OCI-LY7 (cell line): ENCODE measurements at regions of chr15 and their contacts with region 1.

Region 1: DNA sequence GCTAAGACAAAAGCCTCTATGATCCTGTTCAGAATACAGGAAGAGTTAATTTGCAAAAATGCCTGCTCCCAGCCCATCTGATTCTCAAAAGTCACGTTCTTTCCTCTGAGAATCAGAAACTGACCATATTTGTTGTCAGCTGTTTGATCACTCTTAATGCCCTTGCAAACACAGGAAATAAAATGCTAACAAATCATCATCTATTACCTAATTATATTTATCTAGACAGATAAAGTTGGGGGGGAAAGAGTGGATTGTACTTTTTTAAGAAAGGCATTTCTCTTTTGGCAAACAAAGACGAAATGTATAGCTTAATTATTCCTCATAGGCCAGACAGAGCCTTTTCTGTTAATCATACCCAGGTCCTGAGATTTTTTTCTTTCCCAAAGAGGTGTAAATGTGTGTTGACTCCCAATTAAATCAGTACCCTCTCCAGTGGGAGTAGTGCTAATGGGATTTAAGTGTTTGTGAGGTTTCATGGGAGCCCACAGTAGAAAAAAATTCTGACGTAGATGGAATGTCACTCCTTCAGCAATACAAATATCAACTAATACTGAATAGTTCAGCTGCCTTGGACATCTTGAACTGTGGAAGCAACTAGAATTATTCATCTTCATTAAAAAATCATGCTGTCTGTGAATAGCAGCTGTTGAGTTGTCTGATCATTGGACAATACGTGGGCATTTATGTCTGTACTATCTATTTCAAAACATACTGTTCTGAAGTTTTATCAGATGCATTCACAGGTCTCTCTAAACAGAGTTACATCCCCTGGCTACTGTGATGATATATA is 22.5 kb upstream of the BNIP2 start:
- DNase-seq: no peak
- H3K4me3 ChIP-seq: no peak overlapping the region
- H3K27ac ChIP-seq: no peak overlapping the region
- H3K4me1 ChIP-seq: no peaks in the 10 kb centered on the region
- CTCF ChIP-seq: no peak

Region 2: GRCh38 chr15:59751552-59752413 is 40.1 kb after region 1 on chr15:
- CTCF ChIA-PET with region 1: no interaction called
- POLR2A ChIA-PET with region 1: no interaction called
- intact Hi-C with region 1: loop called (anchors 1 kb)
- DNase-seq: peak; percentile 11
- H3K4me3 ChIP-seq: no peak overlapping the region
- H3K27ac ChIP-seq: no peak overlapping the region
- H3K4me1 ChIP-seq: no peaks in the 10 kb centered on the region
- CTCF ChIP-seq: peak; percentile 57